Activated naive CD4-positive, alpha-beta T cell treated with anti-CD3 and anti-CD28 coated beads for 36 hours (primary cell): ENCODE measurements at regions of chr22 and their contacts with region 1.

Region 1: DNA sequence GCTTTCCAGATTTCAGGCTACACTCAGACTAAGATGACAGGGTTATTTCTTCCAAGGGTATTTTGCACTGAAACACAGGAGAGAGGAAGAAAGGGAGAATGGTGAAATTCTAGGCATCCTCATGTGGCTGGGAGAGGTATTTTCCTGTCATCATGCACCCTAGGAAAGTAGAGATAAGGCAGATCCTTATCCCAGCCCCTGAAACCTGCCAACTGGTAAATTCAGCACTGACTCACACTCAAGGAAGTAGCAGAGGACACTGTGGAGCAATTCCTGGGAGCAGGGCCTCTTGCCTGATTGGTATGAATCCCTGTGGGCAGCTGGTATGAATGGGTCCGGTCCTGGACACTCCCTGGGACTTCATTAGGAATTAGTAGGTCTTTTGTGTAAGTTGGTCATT is 37.6 kb upstream of the SLC5A1 start:
- DNase-seq: no peak
- H3K4me3 Mint-ChIP-seq: no peak overlapping the region
- H3K27ac Mint-ChIP-seq: no peak overlapping the region
- H3K4me1 Mint-ChIP-seq: peaks cover 2% of the 10 kb centered on the region
- H3K27me3 Mint-ChIP-seq: peaks cover 9% of the 10 kb centered on the region

Region 2: GRCh38 chr22:31876156-31876920 is 129.1 kb before region 1 on chr22:
- CTCF ChIA-PET with region 1: no interaction called
- intact Hi-C with region 1: no loop called
- DNase-seq: no peak
- H3K4me3 Mint-ChIP-seq: no peak overlapping the region
- H3K27ac Mint-ChIP-seq: no peak overlapping the region
- H3K4me1 Mint-ChIP-seq: no peaks in the 10 kb centered on the region
- H3K27me3 Mint-ChIP-seq: no peaks in the 10 kb centered on the region

Region 3: GRCh38 chr22:32103658-32104315 is 98.3 kb after region 1 on chr22:
- CTCF ChIA-PET with region 1: no interaction called
- intact Hi-C with region 1: no loop called
- DNase-seq: no peak
- H3K4me3 Mint-ChIP-seq: no peak overlapping the region
- H3K27ac Mint-ChIP-seq: no peak overlapping the region
- H3K4me1 Mint-ChIP-seq: no peaks in the 10 kb centered on the region
- H3K27me3 Mint-ChIP-seq: peaks cover 19% of the 10 kb centered on the region

Region 4: GRCh38 chr22:32737811-32738497 is 732.5 kb after region 1 on chr22:
- CTCF ChIA-PET with region 1: no interaction called
- intact Hi-C with region 1: loop called (anchors 10 kb)
- DNase-seq: no peak
- H3K4me3 Mint-ChIP-seq: no peak overlapping the region
- H3K27ac Mint-ChIP-seq: no peak overlapping the region
- H3K4me1 Mint-ChIP-seq: no peaks in the 10 kb centered on the region
- H3K27me3 Mint-ChIP-seq: peaks cover 10% of the 10 kb centered on the region